Astrocyte of the cerebellum (primary cell): ENCODE measurements at regions of chr2 and their contacts with region 1.

Region 1: DNA sequence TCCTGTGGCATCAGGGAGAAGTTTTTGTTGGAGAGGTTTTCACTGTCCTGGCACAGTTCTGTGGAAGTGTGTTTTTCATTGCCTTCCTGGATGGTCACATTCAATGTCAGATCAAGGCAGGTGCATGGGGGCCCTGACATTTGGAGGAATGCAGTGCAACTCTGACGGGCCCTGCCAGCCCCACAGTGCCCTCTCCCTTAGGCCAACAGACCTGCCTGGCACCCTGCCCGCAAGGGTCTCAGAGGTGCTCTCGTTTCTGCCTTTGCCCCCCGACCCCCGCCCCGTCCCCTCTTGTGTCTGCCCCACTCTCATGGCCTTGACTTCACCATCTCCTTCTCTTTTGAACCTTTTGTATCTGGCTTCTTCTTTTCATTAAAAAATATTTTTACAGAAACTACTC is 257.2 kb upstream of the HDAC4 start:
- DNase-seq: no peak
- H3K4me3 ChIP-seq: no peak overlapping the region
- CTCF ChIP-seq: no peak

Region 2: DNA sequence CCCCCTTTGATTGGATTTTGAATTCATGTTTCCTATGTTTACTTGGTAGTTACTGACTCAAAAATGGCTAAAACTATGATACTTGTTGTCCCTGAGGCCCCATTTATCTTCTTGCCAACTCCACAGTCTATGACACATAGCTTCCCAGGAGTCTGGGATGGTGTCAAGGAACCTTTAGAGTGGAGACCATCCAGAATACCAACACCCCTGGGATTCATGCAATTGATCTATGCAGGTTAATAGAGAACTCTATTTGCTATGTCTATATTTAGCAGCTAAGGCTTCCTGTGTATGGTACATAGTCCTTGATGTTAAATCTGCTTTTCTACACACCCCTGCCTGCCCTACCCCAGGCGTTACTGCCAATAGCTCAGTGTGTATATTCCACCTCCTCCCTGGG is 38.6 kb before region 1 on chr2:
- in situ Hi-C with region 1: loop called (anchors 5 kb)
- DNase-seq: no peak
- H3K4me3 ChIP-seq: no peak overlapping the region
- CTCF ChIP-seq: no peak

Region 3: GRCh38 chr2:239944694-239945551 is 286.9 kb after region 1 on chr2:
- in situ Hi-C with region 1: no loop called
- DNase-seq: no peak
- H3K4me3 ChIP-seq: no peak overlapping the region
- CTCF ChIP-seq: no peak

Region 4: DNA sequence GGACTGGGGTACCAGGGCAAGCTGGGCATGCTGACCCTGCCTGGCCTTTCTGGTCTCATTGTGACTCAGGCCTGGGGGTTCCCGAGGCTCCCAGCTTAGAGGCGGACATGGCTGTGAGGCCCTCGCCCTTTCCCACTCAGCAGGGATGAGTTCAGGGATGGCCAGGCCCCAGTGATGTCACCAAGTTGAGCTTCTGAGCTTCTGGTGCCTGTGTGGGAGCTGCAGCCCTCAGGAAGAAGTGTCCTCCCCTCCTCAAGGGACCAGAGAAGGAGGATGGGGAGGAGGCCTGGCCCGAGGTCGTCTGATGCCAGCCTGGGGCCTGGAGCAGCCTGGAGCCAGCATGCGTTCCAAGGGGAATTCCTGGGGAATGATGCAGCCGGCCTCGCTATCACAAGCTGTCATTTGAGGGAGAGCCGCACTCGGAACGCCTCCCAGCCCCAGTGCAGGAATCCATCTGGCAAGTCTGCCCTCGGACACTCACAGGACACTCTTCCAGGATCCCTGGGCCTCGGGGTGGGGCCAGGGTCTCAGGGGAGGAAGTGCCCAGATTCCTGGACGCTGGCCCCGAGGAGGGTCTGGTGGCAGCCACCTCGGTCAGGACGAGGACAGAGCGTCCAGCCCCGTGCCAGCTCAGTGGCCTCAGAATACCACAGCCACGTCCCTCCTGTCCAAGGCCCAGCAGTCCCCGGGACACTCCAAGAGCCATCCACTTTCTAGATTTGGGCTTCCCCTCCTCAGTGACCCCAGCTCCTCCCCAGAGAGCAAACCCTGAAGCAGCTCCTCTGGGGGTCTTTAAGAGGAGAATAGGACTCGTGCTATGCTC is 716.3 kb after region 1 on chr2:
- in situ Hi-C with region 1: no loop called
- DNase-seq: peak; percentile 55
- H3K4me3 ChIP-seq: no peak overlapping the region
- CTCF ChIP-seq: no peak